Endothelial cell of umbilical vein (primary cell): ENCODE measurements at regions of chr7 and their contacts with region 1.

Region 1: DNA sequence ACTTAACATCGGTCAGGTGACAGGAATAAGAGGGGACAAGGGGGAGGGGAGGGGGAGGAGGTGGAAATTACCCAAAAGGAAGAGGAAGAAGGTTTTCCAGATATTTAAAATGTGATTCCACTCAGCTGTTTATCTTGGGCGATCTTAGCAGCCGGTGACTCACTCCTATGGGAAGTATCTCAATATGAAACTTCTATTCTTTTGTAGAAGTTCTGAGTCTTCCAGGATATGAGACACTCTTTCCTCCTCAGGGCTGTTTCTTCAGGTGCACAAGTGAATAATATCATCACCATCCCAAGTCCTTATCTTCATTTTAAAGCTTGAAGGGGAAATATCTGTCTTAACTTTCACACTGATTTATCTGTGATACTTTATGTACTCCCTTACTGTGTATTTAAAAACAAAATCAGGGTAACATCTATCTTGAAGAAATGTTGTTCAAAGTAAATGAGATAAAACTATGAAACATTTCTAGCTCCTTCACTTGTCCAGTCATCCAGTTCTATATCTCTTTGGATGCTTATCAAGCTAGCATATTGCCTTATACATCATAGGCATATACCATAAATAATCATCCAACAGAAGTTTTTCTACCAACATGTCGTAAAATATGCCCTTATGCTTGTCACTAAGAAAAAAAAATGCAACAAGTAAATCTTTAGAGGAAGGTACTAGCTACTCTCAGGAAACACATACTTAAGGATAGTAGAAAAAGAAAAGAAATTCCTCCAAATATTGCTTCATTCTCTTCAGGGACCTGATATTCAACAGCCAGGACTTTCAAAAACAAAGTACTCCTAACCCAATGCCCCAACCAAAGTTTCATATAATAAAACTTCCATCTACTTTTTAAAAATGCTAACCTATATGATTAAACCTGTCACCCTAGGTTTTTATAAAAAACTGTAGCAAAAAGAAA is 13.7 kb downstream of the DOCK4 start:
- DNase-seq: peak; percentile 98
- H3K4me3 ChIP-seq: no peak overlapping the region
- H3K27ac ChIP-seq: peak overlapping the region; percentile 90
- H3K4me1 ChIP-seq: peaks cover 71% of the 10 kb centered on the region
- H3K27me3 ChIP-seq: no peaks in the 10 kb centered on the region
- CTCF ChIP-seq: no peak
- POLR2A ChIP-seq: peak; percentile 81

Region 2: GRCh38 chr7:111958896-111959295 is 233.6 kb before region 1 on chr7:
- CTCF ChIA-PET with region 1: no interaction called
- POLR2A ChIA-PET with region 1: no interaction called
- dilution Hi-C with region 1: no loop called
- intact Hi-C with region 1: loop called (anchors 1 kb)
- DNase-seq: peak; percentile 85
- H3K4me3 ChIP-seq: no peak overlapping the region
- H3K27ac ChIP-seq: peak overlapping the region; percentile 68
- H3K4me1 ChIP-seq: peaks cover 15% of the 10 kb centered on the region
- H3K27me3 ChIP-seq: no peaks in the 10 kb centered on the region
- CTCF ChIP-seq: no peak
- POLR2A ChIP-seq: no peak

Region 3: GRCh38 chr7:112022128-112022527 is 170.4 kb before region 1 on chr7:
- CTCF ChIA-PET with region 1: no interaction called
- POLR2A ChIA-PET with region 1: no interaction called
- dilution Hi-C with region 1: no loop called
- intact Hi-C with region 1: loop called (anchors 1 kb)
- DNase-seq: no peak
- H3K4me3 ChIP-seq: no peak overlapping the region
- H3K27ac ChIP-seq: peak overlapping the region; percentile 97
- H3K4me1 ChIP-seq: peaks cover 43% of the 10 kb centered on the region
- H3K27me3 ChIP-seq: no peaks in the 10 kb centered on the region
- CTCF ChIP-seq: no peak
- POLR2A ChIP-seq: no peak

Region 4: GRCh38 chr7:112132051-112132694 is 60.3 kb before region 1 on chr7:
- CTCF ChIA-PET with region 1: no interaction called
- POLR2A ChIA-PET with region 1: no interaction called
- dilution Hi-C with region 1: no loop called
- intact Hi-C with region 1: loop called (anchors 1 kb)
- DNase-seq: peak; percentile 95
- H3K4me3 ChIP-seq: no peak overlapping the region
- H3K27ac ChIP-seq: peak overlapping the region; percentile 91
- H3K4me1 ChIP-seq: peaks cover 43% of the 10 kb centered on the region
- H3K27me3 ChIP-seq: no peaks in the 10 kb centered on the region
- CTCF ChIP-seq: no peak
- POLR2A ChIP-seq: no peak

Region 5: DNA sequence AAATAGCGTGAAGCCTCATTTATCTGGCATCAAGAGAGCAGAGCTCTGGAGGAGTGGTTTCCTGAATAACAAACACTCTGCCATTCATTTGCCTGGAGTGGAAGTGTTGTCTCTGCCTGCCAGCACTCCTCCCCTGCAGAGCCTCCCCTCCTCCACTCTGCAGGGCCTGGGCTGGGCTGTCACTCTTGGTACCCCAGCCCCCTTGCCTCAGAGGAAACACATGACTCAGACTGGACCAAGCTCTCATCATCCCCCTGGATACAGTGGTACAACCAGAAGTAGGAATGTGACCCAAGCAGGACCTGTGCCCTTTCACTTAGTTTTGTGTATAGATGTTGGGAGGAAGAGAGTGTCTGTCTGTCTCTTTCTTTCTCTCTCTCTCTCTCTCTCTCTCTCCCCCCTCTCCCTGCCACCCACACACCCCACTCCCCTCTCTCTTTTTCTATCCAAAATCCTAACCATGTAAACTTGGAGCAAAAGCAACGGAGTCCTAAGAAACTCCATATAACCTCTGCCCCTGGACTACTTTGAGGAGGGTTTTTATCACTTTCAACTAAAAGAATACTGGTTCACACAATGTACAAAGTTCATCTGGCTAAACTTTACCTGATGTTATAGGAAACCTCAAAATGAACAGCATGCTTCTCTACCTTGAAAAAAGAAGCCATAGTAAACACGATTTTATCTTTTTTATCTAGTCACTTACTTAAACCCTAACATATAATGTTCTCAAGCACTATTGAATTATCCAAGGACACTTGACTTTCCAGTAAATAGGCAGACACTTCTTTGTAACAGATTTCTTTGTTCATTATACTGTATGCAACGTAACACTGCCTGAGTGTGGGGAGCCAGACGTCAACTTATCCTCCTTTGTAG is 30.1 kb before region 1 on chr7:
- CTCF ChIA-PET with region 1: interaction called, 5 read pairs
- POLR2A ChIA-PET with region 1: interaction called, 3 read pairs
- dilution Hi-C with region 1: no loop called
- intact Hi-C with region 1: loop called (anchors 1 kb)
- DNase-seq: peak; percentile 98
- H3K4me3 ChIP-seq: peak overlapping the region in 1 of 3 experiments; percentile 13
- H3K27ac ChIP-seq: peak overlapping the region; percentile 81
- H3K4me1 ChIP-seq: peaks cover 70% of the 10 kb centered on the region
- H3K27me3 ChIP-seq: no peaks in the 10 kb centered on the region
- CTCF ChIP-seq: no peak
- POLR2A ChIP-seq: no peak

Region 6: DNA sequence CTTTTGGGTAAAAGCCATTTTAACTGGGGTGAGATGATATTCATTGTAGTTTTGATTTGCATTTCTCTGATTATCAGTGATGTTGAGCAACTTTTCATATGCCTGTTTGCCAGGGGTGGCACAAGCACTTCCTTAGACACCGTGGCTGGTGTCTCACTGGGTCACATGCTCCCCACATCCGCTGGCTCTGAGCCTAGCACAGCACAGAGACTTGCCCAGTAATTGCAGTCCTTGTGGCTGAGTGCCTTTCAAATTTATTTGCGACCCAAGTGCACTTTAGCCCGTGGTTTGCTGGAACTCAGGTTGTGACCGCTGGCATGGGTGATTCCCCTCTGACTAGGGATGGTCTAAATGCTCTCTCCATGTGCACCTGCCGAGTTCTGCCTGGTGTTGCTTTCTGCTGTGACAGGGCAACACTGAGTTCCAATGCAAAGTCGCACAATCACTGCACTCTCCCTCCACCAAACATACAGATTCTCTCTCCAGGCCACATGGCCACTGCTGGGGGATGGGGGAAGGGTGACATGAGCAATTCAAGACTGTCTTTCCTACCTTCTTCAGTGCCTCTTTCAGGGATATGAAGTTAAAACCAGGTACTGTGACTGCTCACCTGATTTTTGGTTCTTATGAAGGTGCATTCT is 80.5 kb after region 1 on chr7:
- CTCF ChIA-PET with region 1: no interaction called
- POLR2A ChIA-PET with region 1: no interaction called
- dilution Hi-C with region 1: no loop called
- intact Hi-C with region 1: no loop called
- DNase-seq: no peak
- H3K4me3 ChIP-seq: no peak overlapping the region
- H3K27ac ChIP-seq: no peak overlapping the region
- H3K4me1 ChIP-seq: no peaks in the 10 kb centered on the region
- H3K27me3 ChIP-seq: no peaks in the 10 kb centered on the region
- CTCF ChIP-seq: no peak
- POLR2A ChIP-seq: no peak